ENCODE measurements at regions of chr4 and their contacts with region 1.

Region 1: DNA sequence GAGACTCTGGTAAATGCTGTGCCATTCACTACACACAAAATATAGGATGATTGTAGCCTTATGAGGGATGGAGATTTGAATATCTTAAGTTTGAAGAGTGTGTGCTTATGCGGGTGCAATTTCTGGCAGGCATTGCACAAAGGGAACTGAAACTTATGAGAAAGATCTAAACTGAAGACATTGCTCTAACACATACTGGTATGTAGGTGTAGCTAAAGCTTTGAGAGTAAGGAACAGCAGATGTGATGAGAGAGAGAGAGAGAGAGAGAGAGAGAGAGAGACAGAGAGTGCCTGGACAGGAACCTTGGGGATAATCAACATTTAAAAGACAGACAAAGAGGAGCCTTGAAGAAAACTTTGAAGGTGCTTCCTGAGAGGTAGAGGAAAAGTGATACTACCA is 379.7 kb downstream of the SPRY1 start:
- DNase-seq: no peak
- H3K4me3 Mint-ChIP-seq: no peak overlapping the region
- H3K27ac Mint-ChIP-seq: no peak overlapping the region
- H3K4me1 Mint-ChIP-seq: peaks cover 6% of the 10 kb centered on the region
- H3K27me3 Mint-ChIP-seq: no peaks in the 10 kb centered on the region
- CTCF ChIP-seq: no peak

Region 2: GRCh38 chr4:123750044-123750443 is 26.2 kb before region 1 on chr4:
- CTCF ChIA-PET with region 1: interaction called, 19 read pairs
- POLR2A ChIA-PET with region 1: no interaction called
- intact Hi-C with region 1: no loop called
- DNase-seq: no peak
- H3K4me3 Mint-ChIP-seq: no peak overlapping the region
- H3K27ac Mint-ChIP-seq: no peak overlapping the region
- H3K4me1 Mint-ChIP-seq: no peaks in the 10 kb centered on the region
- H3K27me3 Mint-ChIP-seq: no peaks in the 10 kb centered on the region
- CTCF ChIP-seq: no peak

Region 3: GRCh38 chr4:123821861-123822260 is 45.6 kb after region 1 on chr4:
- CTCF ChIA-PET with region 1: interaction called, 13 read pairs
- POLR2A ChIA-PET with region 1: no interaction called
- intact Hi-C with region 1: no loop called
- DNase-seq: no peak
- H3K4me3 Mint-ChIP-seq: no peak overlapping the region
- H3K27ac Mint-ChIP-seq: no peak overlapping the region
- H3K4me1 Mint-ChIP-seq: peaks cover 30% of the 10 kb centered on the region
- H3K27me3 Mint-ChIP-seq: no peaks in the 10 kb centered on the region
- CTCF ChIP-seq: no peak

Region 4: DNA sequence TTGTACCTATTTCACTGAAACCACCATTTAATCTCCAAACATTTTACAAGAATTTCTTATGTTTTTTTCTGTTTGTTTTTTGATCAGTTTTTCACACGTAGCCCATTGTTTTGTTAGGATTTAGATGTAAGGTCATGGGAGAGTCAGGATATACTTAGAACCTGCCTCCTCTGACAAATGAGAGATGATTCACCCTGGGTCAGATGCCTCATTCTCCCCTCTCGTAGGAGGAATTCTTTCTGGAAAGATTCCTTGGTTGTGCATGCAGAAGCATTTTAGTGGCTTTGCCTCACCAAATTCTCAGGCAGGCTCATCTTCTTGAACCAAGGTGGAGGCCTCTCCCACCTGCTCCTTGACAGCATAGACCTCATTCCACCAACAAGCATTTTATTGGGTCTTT is 219.7 kb after region 1 on chr4:
- CTCF ChIA-PET with region 1: interaction called, 15 read pairs
- POLR2A ChIA-PET with region 1: no interaction called
- intact Hi-C with region 1: loop called (anchors 10 kb)
- DNase-seq: peak; percentile 49
- H3K4me3 Mint-ChIP-seq: no peak overlapping the region
- H3K27ac Mint-ChIP-seq: no peak overlapping the region
- H3K4me1 Mint-ChIP-seq: peaks cover 8% of the 10 kb centered on the region
- H3K27me3 Mint-ChIP-seq: no peaks in the 10 kb centered on the region
- CTCF ChIP-seq: no peak

Region 5: GRCh38 chr4:124262211-124263179 is 486.2 kb after region 1 on chr4:
- CTCF ChIA-PET with region 1: interaction called, 24 read pairs
- POLR2A ChIA-PET with region 1: interaction called, 3 read pairs
- intact Hi-C with region 1: loop called (anchors 1 kb)
- DNase-seq: peak; percentile 87
- H3K4me3 Mint-ChIP-seq: no peak overlapping the region
- H3K27ac Mint-ChIP-seq: no peak overlapping the region
- H3K4me1 Mint-ChIP-seq: peaks cover 5% of the 10 kb centered on the region
- H3K27me3 Mint-ChIP-seq: no peaks in the 10 kb centered on the region
- CTCF ChIP-seq: peak; percentile 77